IMR-90 (cell line): ENCODE measurements at regions of chr15 and their contacts with region 1.

Region 1: GRCh38 chr15:35545824-35546510 is at the start of gene DPH6:
- DNase-seq: peak; percentile 79
- ATAC-seq: peak; percentile 94
- H3K4me3 ChIP-seq: peak within 1 kb of the TSS; percentile 79
- H3K27ac ChIP-seq: peak within 1 kb of the TSS; percentile 96
- H3K4me1 ChIP-seq: peaks cover 2% of the 10 kb centered on the region; the same call in 1 of the 2 replicates
- H3K27me3 ChIP-seq: no peaks in the 10 kb centered on the region
- CTCF ChIP-seq: no peak
- POLR2A ChIP-seq: peak; percentile 79
- RAD21 ChIP-seq: no peak
- total RNA-seq, gene DPH6: 8.1 and 21.4 TPM in 2 replicates

Region 2: DNA sequence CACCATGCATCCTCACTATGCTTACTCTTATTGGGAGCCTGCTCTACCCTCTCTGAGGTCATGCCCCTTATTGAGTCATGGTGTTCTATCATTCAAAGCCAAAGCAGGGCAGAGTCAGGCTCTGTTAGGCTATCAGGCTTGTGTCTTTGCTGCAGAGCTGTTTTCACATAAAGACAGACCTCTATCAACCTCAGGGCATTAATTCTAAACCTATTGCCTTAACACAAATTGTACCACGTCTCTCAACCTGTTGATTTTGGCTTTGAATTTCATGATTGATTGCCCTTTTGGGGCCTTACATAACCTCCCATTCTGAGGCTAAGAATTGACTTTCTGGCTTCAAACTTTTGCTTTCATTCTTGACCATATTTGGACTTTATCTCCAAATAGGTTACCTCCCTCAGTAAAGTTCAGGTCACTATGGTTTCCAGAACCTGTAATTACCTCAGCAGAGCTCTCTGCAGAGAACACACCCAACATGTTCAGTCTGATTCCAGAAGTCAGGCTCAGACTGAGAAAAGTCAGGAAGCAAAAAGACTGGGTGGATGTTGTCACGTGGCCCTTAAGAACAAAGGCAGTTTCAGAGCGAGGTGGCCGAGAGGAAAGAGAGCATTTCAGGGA is 239.5 kb before region 1 on chr15:
- CTCF ChIA-PET with region 1: no interaction called
- POLR2A ChIA-PET with region 1: no interaction called
- dilution Hi-C with region 1: no loop called
- in situ Hi-C with region 1: no loop called
- intact Hi-C with region 1: no loop called
- DNase-seq: peak; percentile 76
- ATAC-seq: peak; percentile 78
- H3K4me3 ChIP-seq: no peak overlapping the region
- H3K27ac ChIP-seq: peak overlapping the region; percentile 91
- H3K4me1 ChIP-seq: peaks cover 16% of the 10 kb centered on the region
- H3K27me3 ChIP-seq: no peaks in the 10 kb centered on the region
- CTCF ChIP-seq: no peak
- POLR2A ChIP-seq: no peak
- RAD21 ChIP-seq: no peak

Region 3: GRCh38 chr15:35740761-35741160 is 194.8 kb after region 1 on chr15:
- CTCF ChIA-PET with region 1: no interaction called
- POLR2A ChIA-PET with region 1: no interaction called
- dilution Hi-C with region 1: no loop called
- in situ Hi-C with region 1: no loop called
- intact Hi-C with region 1: loop called (anchors 5 kb)
- DNase-seq: peak; percentile 89
- ATAC-seq: peak; percentile 70
- H3K4me3 ChIP-seq: no peak overlapping the region
- H3K27ac ChIP-seq: no peak overlapping the region
- H3K4me1 ChIP-seq: no peaks in the 10 kb centered on the region
- H3K27me3 ChIP-seq: no peaks in the 10 kb centered on the region
- CTCF ChIP-seq: no peak
- POLR2A ChIP-seq: no peak
- RAD21 ChIP-seq: no peak

Region 4: GRCh38 chr15:35912196-35912595 is 366.2 kb after region 1 on chr15:
- CTCF ChIA-PET with region 1: no interaction called
- POLR2A ChIA-PET with region 1: no interaction called
- dilution Hi-C with region 1: no loop called
- in situ Hi-C with region 1: no loop called
- intact Hi-C with region 1: no loop called
- DNase-seq: peak; percentile 13
- ATAC-seq: 0 out of 2 replicates have a peak, but pooled peaks have one; percentile 24
- H3K4me3 ChIP-seq: no peak overlapping the region
- H3K27ac ChIP-seq: no peak overlapping the region
- H3K4me1 ChIP-seq: no peaks in the 10 kb centered on the region
- H3K27me3 ChIP-seq: no peaks in the 10 kb centered on the region
- CTCF ChIP-seq: no peak; the same call in none of the 2 replicates
- POLR2A ChIP-seq: no peak
- RAD21 ChIP-seq: peak; percentile 16; the same call in 1 of the 2 replicates

Region 5: DNA sequence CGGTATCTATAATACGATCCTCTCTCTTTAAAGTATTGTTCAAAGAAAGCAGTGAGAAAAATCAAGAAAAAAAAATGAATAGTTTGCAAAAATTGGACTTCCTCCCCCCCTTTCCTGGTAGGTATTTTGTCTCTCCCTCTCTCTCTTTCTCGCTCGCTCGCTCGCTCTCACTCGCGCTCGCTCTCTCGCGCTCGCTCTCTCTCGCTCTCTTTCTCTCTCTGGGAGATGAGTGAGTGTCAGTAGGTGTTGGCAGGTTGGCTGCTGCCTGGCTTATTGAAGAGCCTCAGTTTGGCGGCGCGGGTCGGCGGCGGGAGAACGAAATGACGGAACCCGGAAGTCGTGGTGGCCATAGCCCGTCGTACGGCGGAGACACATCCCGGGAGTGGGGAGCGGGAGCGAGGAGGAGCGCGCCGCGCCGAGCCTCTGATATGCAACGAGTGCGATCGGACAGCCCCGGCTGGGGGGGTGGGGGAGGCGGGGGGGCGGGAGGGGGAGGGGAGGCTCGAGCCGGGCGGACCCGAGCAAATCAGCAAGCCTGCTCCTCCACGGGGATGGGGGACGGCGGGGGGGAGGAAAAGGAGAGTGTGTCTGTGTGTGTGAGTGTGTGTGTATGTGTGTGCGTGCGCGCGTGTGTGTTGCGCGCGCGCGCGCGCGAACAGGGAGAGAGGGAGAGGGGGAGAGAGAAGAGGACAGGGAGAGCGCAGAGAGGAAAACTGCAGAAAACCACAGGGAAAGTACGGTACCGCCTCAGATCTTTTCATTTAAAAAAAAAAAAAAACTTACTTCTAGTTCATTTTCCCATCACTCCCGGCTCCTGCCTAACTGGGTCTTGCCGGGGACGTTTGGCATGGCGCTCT is 1554.4 kb after region 1 on chr15 and contains the start of gene MEIS2:
- CTCF ChIA-PET with region 1: no interaction called
- POLR2A ChIA-PET with region 1: no interaction called
- dilution Hi-C with region 1: no loop called
- in situ Hi-C with region 1: no loop called
- intact Hi-C with region 1: loop called (anchors 10 kb)
- DNase-seq: peak; percentile 96
- ATAC-seq: peak; percentile 52
- H3K4me3 ChIP-seq: peak within 1 kb of the TSS; percentile 94
- H3K27ac ChIP-seq: peak within 1 kb of the TSS; percentile 99
- H3K4me1 ChIP-seq: peaks cover 3% of the 10 kb centered on the region
- H3K27me3 ChIP-seq: no peaks in the 10 kb centered on the region
- CTCF ChIP-seq: no peak
- POLR2A ChIP-seq: peak; percentile 77
- RAD21 ChIP-seq: no peak
- total RNA-seq, gene MEIS2: 50.3 and 71.3 TPM in 2 replicates